Caco-2 (cell line): ENCODE measurements at regions of chr13 and their contacts with region 1.

Region 1: DNA sequence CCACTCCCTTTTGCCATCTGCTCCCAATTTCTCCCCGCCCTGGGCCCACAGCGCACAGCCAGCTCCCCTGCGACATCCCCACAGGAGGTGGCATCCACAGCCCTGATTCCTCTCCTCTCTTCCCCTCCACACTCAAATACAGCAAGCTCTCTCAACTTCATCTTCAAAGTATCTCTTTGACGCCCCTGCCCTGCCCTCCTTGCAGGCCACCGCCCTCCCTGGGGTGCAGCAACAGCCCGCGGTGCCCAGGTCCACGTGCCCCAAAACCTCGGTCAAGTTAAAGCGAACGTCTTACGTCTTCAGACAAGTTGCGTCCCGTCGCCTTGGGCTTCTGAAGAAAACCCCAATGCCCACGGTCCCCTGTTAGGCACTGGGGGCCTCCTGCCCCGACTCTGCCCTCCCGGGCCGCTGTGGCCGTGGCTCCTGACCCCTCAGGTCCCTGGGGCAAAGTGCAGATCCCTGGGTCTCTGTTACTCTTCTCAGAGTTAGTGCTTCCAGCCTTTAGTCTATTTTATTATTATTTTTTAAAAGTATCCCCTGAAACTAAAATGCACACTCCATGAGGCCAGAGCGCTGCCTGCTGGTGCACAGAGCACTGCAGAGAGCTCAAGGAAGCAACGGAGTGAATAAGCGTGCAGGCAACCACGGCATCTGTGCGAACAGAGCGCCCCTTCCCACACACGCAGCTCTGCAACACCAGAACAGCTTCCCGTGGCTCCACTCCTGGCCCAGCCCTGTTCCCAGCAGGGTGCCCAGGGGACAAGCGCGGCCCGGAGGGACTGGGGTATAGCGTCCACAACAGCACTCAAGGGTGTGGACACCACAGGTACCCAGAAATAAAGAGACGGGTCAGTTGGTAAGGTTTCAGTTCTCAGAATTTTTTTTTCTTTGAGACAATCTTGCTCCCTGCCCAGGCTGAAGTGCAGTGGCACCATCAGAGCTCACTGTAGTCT is 26.4 kb downstream of the IL17D start:
- DNase-seq: no peak
- H3K4me3 ChIP-seq: no peak overlapping the region
- H3K4me3 Mint-ChIP-seq: no peak overlapping the region
- H3K27ac Mint-ChIP-seq: no peak overlapping the region
- H3K4me1 ChIP-seq: no peaks in the 10 kb centered on the region
- H3K4me1 Mint-ChIP-seq: no peaks in the 10 kb centered on the region
- H3K27me3 ChIP-seq: no peaks in the 10 kb centered on the region
- H3K27me3 Mint-ChIP-seq: no peaks in the 10 kb centered on the region
- CTCF ChIP-seq: no peak

Region 2: DNA sequence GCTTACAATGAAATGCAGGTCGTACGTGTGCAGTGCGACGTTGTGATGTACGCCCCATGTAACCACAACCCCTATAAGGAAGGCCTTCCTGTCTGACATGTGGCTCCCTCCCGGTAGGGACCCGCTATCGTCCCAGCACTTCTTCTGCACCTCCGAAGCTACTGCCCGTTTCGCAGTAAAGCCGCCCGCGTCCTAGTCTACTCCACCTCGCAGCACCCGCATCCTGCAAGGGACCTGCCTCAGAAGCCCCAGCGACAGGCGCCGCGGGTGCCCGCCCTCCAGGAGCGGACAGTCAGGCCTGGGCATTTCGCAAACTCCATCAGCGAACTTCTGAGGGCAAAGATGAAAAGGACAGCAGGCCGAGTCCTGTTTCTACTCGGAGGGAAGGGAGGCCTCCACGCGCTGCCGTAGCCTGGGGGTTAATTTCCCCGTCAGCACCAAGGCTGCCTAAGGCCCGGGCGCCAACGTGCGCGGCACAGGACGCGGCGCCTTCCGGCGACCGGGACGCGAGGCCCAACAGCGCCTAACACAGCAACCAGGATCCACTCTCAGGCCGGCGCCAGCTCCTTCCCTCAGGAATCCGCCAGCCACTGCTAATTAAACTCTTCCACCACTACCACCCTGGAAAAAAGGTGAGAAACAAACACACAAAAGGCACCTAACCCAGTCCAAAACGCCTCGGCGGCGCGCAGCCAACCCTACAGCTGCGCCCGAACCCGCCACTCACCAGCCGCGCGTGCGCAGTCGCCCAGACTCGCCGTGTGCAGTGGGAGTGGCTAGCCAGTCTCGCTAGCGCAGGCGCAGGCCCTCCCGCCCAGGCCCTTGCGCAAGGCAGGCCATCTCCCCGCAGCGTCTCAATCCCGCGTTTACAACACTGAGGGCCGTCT is 43.5 kb after region 1 on chr13 and contains the start of gene EEF1AKMT1:
- CTCF ChIA-PET with region 1: no interaction called
- POLR2A ChIA-PET with region 1: no interaction called
- intact Hi-C with region 1: loop called (anchors 5 kb)
- DNase-seq: peak; percentile 95 to 98
- H3K4me3 ChIP-seq: peak within 1 kb of the TSS; percentile 58
- H3K4me3 Mint-ChIP-seq: peak within 1 kb of the TSS; percentile 87
- H3K27ac Mint-ChIP-seq: peak within 1 kb of the TSS; percentile 97
- H3K4me1 ChIP-seq: peaks cover 9% of the 10 kb centered on the region
- H3K4me1 Mint-ChIP-seq: peaks cover 16% of the 10 kb centered on the region
- H3K27me3 ChIP-seq: no peaks in the 10 kb centered on the region
- H3K27me3 Mint-ChIP-seq: no peaks in the 10 kb centered on the region
- CTCF ChIP-seq: no peak
- total RNA-seq, gene EEF1AKMT1: 8.6 and 9.6 TPM in 2 replicates